ENCODE measurements at regions of chr1 and their contacts with region 1.

Region 1: GRCh38 chr1:234722904-234723720 is 113.1 kb upstream of the IRF2BP2 start:
- DNase-seq: peak; percentile 62
- H3K4me3 ChIP-seq: peak overlapping the region; percentile 4
- CTCF ChIP-seq: no peak

Region 2: GRCh38 chr1:234617131-234617985 is 105.8 kb before region 1 on chr1:
- in situ Hi-C with region 1: loop called (anchors 5 kb)
- DNase-seq: no peak
- H3K4me3 ChIP-seq: no peak overlapping the region
- CTCF ChIP-seq: peak; percentile 53

Region 3: DNA sequence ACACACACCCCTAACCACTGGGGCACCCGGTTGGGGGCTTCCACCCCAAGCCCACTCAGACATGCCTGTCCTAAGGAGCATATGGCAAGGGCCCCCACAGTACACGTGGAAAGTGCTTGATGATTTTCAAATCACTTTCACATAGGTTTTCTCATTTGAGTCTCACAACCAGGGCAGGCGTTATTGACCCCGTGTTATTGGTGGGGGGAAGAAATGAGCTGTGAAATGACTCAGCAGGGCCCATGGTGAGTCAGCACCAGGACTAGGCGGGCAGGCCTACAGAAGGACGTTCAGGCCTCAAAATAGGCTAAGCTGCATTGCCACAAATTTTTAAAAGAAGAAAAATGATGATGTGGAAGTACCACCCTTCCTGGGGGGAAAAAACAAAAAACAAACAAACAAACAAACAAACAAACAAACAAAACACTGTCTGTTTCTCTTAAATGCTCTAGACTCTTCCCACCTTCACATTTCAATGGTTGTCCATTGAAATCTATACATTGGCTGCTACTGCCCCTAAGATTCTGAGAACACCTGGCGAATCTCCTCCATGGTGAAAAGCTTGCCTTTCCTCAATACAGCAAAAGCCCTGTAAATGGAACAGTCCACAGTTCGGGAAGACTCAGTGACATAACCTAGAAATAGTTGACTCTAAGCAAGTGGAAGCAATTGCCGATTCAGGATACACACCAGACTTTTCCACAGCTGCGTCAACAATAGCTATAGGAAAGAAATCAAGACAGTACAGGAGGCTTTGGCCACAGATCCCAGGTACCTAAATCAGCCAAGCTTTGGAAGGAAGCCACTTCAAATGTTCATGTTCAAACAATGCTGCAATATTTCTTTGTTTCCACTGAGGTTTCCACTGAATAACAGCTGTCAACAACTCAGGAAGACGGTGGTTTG is 170.9 kb after region 1 on chr1:
- in situ Hi-C with region 1: no loop called
- DNase-seq: no peak
- H3K4me3 ChIP-seq: no peak overlapping the region
- CTCF ChIP-seq: no peak